Heart right ventricle (tissue), 16 donors: ENCODE measurements at regions of chr11 and their contacts with region 1.

Region 1: GRCh38 chr11:66694732-66695207 is 17.1 kb upstream of the RBM4B start:
- DNase-seq: peak; percentile 82 to 85
- ATAC-seq: peak; percentile 69 to 89 (median 86)
- H3K4me3 ChIP-seq: no peak overlapping the region
- H3K27ac ChIP-seq: no peak overlapping the region
- H3K4me1 ChIP-seq: peaks cover 0 to 8% (median 5%) of the 10 kb centered on the region in 9 donors
- H3K27me3 ChIP-seq: no peaks in the 10 kb centered on the region
- CTCF ChIP-seq: peak; percentile 78 to 94 (median 91)

Region 2: GRCh38 chr11:66835768-66836405 is 141.1 kb after region 1 on chr11:
- intact Hi-C with region 1: loop called (anchors 1 to 5 kb)
- DNase-seq: no peak
- ATAC-seq: no peak
- H3K4me3 ChIP-seq: no peak overlapping the region
- H3K27ac ChIP-seq: no peak overlapping the region
- H3K4me1 ChIP-seq: peaks cover 0 to 8% (median 0%) of the 10 kb centered on the region in 9 donors
- H3K27me3 ChIP-seq: no peaks in the 10 kb centered on the region
- CTCF ChIP-seq: no peak

Region 3: GRCh38 chr11:66883016-66883968 is 188.5 kb after region 1 on chr11:
- intact Hi-C with region 1: loop called in 2 of 10 experiments (anchors 2 to 5 kb)
- DNase-seq: peak in 1 of 2 donors; percentile 65
- ATAC-seq: peak in 5 of 8 donors; percentile 33 to 55 (median 49)
- H3K4me3 ChIP-seq: no peak overlapping the region
- H3K27ac ChIP-seq: no peak overlapping the region
- H3K4me1 ChIP-seq: peaks cover 0 to 15% (median 8%) of the 10 kb centered on the region in 9 donors
- H3K27me3 ChIP-seq: no peaks in the 10 kb centered on the region
- CTCF ChIP-seq: peak in 8 of 9 donors; percentile 35 to 67 (median 56)

Region 4: GRCh38 chr11:67071420-67072284 is 376.9 kb after region 1 on chr11:
- intact Hi-C with region 1: loop called in 1 of 10 experiments (anchors 5 kb)
- DNase-seq: peak; percentile 74 to 80
- ATAC-seq: peak; percentile 77 to 92 (median 87)
- H3K4me3 ChIP-seq: peak overlapping the region in 9 of 10 donors; percentile 12 to 53 (median 45)
- H3K27ac ChIP-seq: no peak overlapping the region
- H3K4me1 ChIP-seq: peaks cover 0 to 10% (median 7%) of the 10 kb centered on the region in 9 donors
- H3K27me3 ChIP-seq: peaks cover 0 to 7% (median 0%) of the 10 kb centered on the region in 7 donors
- CTCF ChIP-seq: peak; percentile 77 to 96 (median 91)